Activated CD4-positive, alpha-beta T cell treated with anti-CD3 and anti-CD28 coated beads for 36 hours (primary cell): ENCODE measurements at regions of chrX and their contacts with region 1.

Region 1: DNA sequence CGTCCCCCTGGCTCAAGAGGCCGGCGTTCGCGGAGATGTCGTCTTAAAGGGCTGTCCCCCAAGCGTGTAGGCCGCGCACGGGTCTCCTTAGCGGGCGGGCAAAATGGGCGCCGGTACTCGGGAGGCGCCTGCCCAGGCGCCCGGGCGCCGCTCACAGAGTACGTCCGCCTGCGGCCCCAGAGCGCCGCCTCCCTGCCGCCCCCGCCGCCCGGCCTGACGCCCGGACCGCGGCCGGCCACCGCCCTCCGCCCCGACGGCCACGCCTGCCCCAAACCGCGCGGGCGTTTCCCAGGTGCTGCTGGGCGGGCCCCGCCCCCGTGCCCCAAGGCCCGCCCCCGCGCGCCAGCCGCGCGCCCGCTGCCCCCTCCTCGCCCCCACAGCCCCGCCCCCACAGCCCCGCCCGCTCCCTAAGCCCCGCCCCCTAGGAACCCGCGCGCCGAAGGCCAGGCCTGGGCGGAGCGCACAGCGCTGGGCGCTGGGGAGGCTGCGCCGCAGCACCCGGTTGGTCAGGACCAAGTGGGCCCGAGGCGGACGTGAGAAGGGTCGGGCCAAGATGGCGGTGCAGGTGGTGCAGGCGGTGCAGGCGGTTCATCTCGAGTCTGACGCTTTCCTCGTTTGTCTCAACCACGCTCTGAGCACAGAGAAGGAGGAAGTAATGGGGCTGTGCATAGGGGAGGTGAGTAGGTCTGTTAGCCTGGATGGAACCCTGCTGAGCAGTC is at the starts of genes BRCC3, CMC4 and MTCP1:
- DNase-seq: peak; percentile 87
- ATAC-seq: peak; percentile 93
- H3K4me3 Mint-ChIP-seq: peak within 1 kb of the TSS; percentile 90
- H3K27ac Mint-ChIP-seq: peak within 1 kb of the TSS; percentile 93
- H3K4me1 Mint-ChIP-seq: peaks cover 53% of the 10 kb centered on the region
- H3K27me3 Mint-ChIP-seq: no peaks in the 10 kb centered on the region
- total RNA-seq, gene BRCC3: 28.1 to 30.3 TPM
- total RNA-seq, gene CMC4: 3.8 to 7.6 TPM
- total RNA-seq, gene MTCP1: 9.3 to 18.1 TPM

Region 2: GRCh38 chrX:154804957-154805695 is 266.0 kb before region 1 on chrX and contains the start of gene MPP1:
- CTCF ChIA-PET with region 1: no interaction called
- POLR2A ChIA-PET with region 1: no interaction called
- intact Hi-C with region 1: loop called in 1 of 2 experiments (anchors 1 kb)
- DNase-seq: peak; percentile 82
- ATAC-seq: peak; percentile 81
- H3K4me3 Mint-ChIP-seq: peak within 1 kb of the TSS; percentile 78
- H3K27ac Mint-ChIP-seq: peak within 1 kb of the TSS; percentile 80
- H3K4me1 Mint-ChIP-seq: peaks cover 38% of the 10 kb centered on the region
- H3K27me3 Mint-ChIP-seq: no peaks in the 10 kb centered on the region
- total RNA-seq, gene MPP1: 24.1 to 27.6 TPM

Region 3: DNA sequence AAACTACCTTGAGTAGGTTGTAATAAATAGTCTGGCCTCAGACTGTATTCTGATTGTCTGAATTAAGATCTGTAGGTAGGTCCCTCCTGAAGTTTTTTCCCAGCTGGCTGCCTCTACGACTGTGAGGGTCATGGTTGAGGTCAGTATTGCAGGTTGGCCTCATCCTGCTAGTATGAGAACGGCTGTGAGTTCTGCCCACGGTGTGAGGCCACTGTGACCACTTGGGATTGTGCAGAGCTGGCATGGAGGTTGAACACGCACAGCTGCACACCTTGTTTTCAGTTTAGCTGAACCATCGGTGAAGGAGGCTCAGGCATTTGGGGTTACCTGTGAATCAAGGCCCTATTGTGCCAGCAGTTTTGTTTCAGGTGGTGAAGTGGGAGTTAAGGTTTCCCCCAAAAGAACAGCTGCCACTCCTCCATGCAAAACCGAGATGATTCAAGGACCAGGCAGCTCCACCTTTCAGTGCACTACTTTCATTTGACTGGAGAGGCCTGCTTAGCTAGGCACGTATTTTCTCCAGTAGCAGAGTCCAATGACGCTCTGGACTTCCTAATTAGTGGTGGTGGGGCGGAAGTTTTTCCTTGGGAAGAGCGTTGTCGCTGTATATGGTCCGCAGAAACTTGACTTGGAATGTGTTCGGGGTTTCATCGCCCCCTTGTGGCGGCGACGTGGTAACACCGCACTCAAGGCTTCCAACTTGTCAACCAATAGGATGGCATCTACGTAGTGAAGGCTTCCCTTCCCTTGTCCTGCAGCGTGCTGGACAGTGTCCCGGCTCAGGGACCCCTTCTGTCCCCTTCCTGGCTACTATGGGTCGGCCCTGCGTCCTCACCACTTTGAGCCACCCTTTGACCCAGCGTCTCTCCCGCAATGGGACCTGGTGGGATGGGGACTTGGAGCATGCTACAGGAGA is 14.0 kb before region 1 on chrX:
- CTCF ChIA-PET with region 1: interaction called, 15 read pairs
- POLR2A ChIA-PET with region 1: no interaction called
- intact Hi-C with region 1: loop called in 1 of 2 experiments (anchors 2 kb)
- DNase-seq: peak; percentile 63
- ATAC-seq: peak; percentile 82
- H3K4me3 Mint-ChIP-seq: peak overlapping the region; percentile 21
- H3K27ac Mint-ChIP-seq: peak overlapping the region; percentile 25
- H3K4me1 Mint-ChIP-seq: peaks cover 33% of the 10 kb centered on the region
- H3K27me3 Mint-ChIP-seq: no peaks in the 10 kb centered on the region

Region 4: DNA sequence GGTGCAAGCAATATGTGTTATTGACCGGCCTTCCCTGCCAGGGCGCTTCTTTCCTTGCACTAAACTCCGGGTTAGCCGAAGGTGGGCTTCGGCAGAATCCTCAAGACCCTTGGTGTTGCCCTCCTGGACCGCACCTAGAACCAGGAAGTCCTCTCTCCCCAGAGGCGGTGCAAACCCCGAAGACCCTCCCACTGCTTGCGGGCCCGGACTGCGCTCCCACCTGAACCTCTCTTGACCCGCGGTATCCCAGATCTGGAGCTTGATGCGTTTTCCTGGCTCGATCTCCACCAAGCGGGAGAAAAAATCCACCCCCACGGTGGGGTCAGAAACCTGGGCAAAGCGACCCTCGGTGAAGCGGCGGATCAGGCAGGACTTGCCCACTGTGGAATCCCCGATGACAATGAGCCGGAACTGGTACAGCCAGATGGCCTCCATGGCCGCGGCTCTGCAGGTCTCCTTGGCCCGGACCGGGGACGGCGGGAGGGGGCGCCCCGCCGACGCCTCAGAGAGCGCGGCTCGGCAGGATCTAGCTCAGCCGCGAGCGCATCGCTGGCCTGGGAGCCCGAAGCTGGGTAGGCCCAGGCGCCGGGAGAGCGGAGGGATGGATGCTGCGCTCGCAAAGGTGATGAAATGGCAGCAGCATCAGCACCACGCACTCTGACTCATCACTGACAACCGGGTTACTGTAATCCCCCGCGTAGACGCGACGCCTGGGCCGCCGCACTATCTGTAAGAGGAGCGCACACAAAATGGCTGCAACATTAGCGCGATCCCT is 192.9 kb after region 1 on chrX and contains the start of gene RAB39B:
- CTCF ChIA-PET with region 1: no interaction called
- POLR2A ChIA-PET with region 1: no interaction called
- intact Hi-C with region 1: loop called in 1 of 2 experiments (anchors 2 kb)
- DNase-seq: peak; percentile 88
- ATAC-seq: peak; percentile 90
- H3K4me3 Mint-ChIP-seq: peak within 1 kb of the TSS; percentile 89
- H3K27ac Mint-ChIP-seq: peak within 1 kb of the TSS; percentile 94
- H3K4me1 Mint-ChIP-seq: peaks cover 21% of the 10 kb centered on the region
- H3K27me3 Mint-ChIP-seq: no peaks in the 10 kb centered on the region
- total RNA-seq, gene RAB39B: 16.4 to 17.2 TPM

Region 5: GRCh38 chrX:155881158-155881993 is 810.2 kb after region 1 on chrX and contains the start of gene VAMP7:
- CTCF ChIA-PET with region 1: no interaction called
- POLR2A ChIA-PET with region 1: no interaction called
- intact Hi-C with region 1: loop called in 1 of 2 experiments (anchors 1 kb)
- DNase-seq: peak; percentile 89
- ATAC-seq: peak; percentile 99
- H3K4me3 Mint-ChIP-seq: peak within 1 kb of the TSS; percentile 90
- H3K27ac Mint-ChIP-seq: peak within 1 kb of the TSS; percentile 88
- H3K4me1 Mint-ChIP-seq: peaks cover 25% of the 10 kb centered on the region
- H3K27me3 Mint-ChIP-seq: no peaks in the 10 kb centered on the region
- total RNA-seq, gene VAMP7: 34.9 to 37.2 TPM